ENCODE measurements at regions of chr3 and their contacts with region 1.

Region 1: GRCh38 chr3:100231668-100232067 is 29.1 kb upstream of the TBC1D23 start:
- DNase-seq: peak; percentile 97
- ATAC-seq: peak; percentile 97
- H3K4me3 ChIP-seq: no peak overlapping the region
- H3K27ac ChIP-seq: peak overlapping the region; percentile 69
- H3K4me1 ChIP-seq: peaks cover 16% of the 10 kb centered on the region
- H3K27me3 ChIP-seq: no peaks in the 10 kb centered on the region
- CTCF ChIP-seq: no peak

Region 2: GRCh38 chr3:99981138-99981537 is 250.5 kb before region 1 on chr3:
- CTCF ChIA-PET with region 1: no interaction called
- POLR2A ChIA-PET with region 1: no interaction called
- intact Hi-C with region 1: no loop called
- DNase-seq: no peak
- ATAC-seq: no peak
- H3K4me3 ChIP-seq: no peak overlapping the region
- H3K27ac ChIP-seq: no peak overlapping the region
- H3K4me1 ChIP-seq: peaks cover 4% of the 10 kb centered on the region; the same call in 1 of the 2 replicates
- H3K27me3 ChIP-seq: no peaks in the 10 kb centered on the region
- CTCF ChIP-seq: no peak

Region 3: GRCh38 chr3:100206687-100207086 is 25.0 kb before region 1 on chr3:
- CTCF ChIA-PET with region 1: no interaction called
- POLR2A ChIA-PET with region 1: interaction called, 19 read pairs
- intact Hi-C with region 1: no loop called
- DNase-seq: no peak
- ATAC-seq: no peak
- H3K4me3 ChIP-seq: no peak overlapping the region
- H3K27ac ChIP-seq: no peak overlapping the region
- H3K4me1 ChIP-seq: no peaks in the 10 kb centered on the region
- H3K27me3 ChIP-seq: no peaks in the 10 kb centered on the region
- CTCF ChIP-seq: no peak

Region 4: DNA sequence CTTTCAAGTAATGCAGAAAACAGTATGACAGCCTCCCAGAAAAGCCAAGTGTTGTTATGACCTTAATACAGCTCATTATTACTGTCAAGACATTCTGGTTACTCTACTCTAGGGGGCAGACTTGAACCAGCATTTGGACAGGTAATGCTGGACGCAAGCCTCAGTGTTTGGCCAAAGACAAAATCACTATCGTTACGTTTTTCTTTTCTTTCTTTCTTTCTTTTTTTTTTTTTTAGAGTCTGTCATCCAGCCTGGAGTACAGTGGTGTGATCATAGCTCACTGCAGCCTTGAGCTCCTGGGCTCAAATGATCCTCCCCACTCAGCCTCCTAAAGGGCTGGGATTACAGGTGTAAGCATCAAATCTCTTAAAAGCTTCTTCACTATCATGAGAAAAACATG is 231.3 kb after region 1 on chr3:
- CTCF ChIA-PET with region 1: no interaction called
- POLR2A ChIA-PET with region 1: no interaction called
- intact Hi-C with region 1: no loop called
- DNase-seq: peak; percentile 79
- ATAC-seq: peak; percentile 94
- H3K4me3 ChIP-seq: no peak overlapping the region; the same call in 1 of the 2 replicates
- H3K27ac ChIP-seq: no peak overlapping the region
- H3K4me1 ChIP-seq: peaks cover 11% of the 10 kb centered on the region
- H3K27me3 ChIP-seq: no peaks in the 10 kb centered on the region
- CTCF ChIP-seq: peak; percentile 93

Measured in PC-3 (cell line).